ENCODE measurements at regions of chr2 and their contacts with region 1.

Region 1: DNA sequence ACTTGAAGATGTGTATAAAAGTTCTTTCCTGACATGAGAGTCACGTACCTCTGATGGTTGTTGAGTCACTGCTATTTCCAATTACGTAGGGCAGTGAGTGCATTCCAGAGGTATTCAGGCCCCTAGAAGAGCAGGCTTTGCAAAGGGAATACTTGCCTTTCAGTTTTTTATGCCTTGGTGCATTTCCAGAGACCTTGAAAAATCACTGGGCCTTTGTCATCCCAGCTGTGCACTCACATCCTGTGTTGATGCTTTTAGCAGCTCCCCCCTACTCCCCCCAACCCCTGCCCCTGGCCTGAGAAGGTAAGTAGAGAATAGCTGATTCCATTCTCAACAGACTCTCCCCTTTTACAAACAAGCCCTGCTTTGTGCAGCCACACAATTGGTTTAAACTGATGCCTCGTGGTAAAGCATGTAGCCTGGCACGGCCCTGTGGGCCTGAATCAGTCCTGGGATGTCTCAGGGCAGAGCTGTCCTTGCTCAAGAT is 174.2 kb downstream of the PRPF40A start:
- DNase-seq: no peak
- ATAC-seq: peak; percentile 72
- H3K4me3 ChIP-seq: no peak overlapping the region
- H3K27ac ChIP-seq: peak overlapping the region; percentile 80 to 98
- H3K4me1 ChIP-seq: peaks cover 2 to 14% of the 10 kb centered on the region in 2 donors
- H3K27me3 ChIP-seq: no peaks in the 10 kb centered on the region

Region 2: DNA sequence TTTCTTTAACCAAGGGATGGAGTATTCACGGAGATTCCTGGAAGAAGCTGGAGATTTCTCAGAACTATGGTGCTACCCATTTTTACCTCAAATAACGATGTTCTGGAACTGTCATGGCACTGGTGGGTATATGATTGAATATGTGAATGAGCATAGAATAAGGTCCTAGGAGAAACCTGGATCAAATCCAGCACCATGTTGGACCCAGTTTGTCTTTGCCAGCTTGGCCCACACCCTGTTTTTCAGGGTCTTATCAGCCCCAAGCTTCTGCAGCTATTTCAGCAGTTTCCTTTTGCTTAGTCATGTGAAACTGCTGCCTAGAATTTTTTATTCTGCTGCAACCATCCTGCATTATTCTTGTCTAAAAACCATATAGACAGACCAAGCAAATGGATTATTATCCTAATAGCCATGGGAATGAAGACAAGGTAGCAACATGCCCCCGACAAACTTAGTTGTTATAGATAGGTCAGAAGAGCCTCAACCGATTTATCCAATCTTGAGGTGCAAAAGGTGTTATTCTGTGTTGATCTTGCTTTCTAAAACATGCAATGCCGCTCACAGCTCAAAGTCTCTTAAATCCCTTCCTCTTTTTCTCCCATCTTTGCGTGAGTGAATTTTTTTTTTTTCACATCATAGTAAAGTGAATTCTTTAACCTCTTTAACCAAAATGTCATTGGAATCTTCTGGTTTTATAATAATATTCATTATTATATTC is 40.6 kb after region 1 on chr2:
- intact Hi-C with region 1: loop called in 1 of 2 experiments (anchors 2 kb)
- DNase-seq: no peak
- ATAC-seq: no peak
- H3K4me3 ChIP-seq: no peak overlapping the region
- H3K27ac ChIP-seq: no peak overlapping the region
- H3K4me1 ChIP-seq: peaks cover 7 to 8% of the 10 kb centered on the region in 2 donors
- H3K27me3 ChIP-seq: no peaks in the 10 kb centered on the region

Region 3: GRCh38 chr2:153268941-153269461 is 726.0 kb after region 1 on chr2:
- intact Hi-C with region 1: no loop called
- DNase-seq: no peak
- ATAC-seq: no peak
- H3K4me3 ChIP-seq: no peak overlapping the region
- H3K27ac ChIP-seq: no peak overlapping the region
- H3K4me1 ChIP-seq: no peaks in the 10 kb centered on the region
- H3K27me3 ChIP-seq: no peaks in the 10 kb centered on the region

Measured in aorta (tissue), 5 donors.